ENCODE measurements at regions of chr4 and their contacts with region 1.

Region 1: DNA sequence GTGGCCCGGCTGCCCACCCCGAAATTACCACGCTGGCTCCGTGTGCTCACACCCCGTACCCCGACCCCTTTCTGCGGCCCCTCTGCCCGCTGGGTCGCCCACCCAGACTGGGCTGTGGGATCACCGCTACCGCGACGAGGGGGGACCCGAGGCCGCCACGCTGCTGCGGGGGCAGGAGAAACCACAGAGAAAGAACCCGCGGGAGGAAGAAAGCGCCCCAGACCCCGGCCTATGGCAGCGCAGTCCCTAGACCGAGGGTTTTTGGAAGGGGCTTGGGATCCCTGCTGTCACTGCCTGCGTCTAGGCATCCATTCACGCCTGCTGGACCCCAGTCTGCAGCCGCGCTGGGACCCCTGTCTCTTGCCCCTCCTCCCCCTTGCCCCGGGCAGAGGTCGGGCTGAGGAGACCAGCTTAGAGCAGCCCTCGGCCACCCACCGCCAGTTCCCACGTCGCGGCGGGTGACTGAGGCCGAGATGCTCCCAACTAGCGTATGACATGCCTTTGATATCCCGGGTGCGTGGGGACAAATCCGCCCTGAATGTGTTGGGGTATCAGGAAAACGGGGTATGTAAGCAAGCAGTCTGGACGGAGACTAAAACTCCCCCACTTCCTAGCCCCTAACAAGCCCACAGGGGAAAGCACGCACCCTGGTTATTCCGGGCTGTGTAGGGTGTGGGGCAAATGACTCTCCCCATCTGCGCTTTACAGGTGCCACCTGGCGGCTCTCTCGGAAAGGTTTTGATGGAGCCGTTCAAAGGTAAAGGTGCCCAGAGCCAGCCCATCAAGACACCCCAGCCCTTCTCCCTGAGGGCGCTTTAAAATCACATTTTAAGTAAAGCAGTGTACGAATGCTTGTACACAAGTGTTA is 862 bp upstream of the INPP4B start:
- DNase-seq: peak; percentile 89
- ATAC-seq: peak; percentile 82
- H3K4me3 Mint-ChIP-seq: peak overlapping the region; percentile 91
- H3K27ac Mint-ChIP-seq: peak overlapping the region; percentile 85
- H3K4me1 Mint-ChIP-seq: peaks cover 17% of the 10 kb centered on the region
- H3K27me3 Mint-ChIP-seq: peaks cover 6% of the 10 kb centered on the region

Region 2: GRCh38 chr4:141307241-141307689 is 1539.7 kb before region 1 on chr4:
- CTCF ChIA-PET with region 1: no interaction called
- POLR2A ChIA-PET with region 1: no interaction called
- intact Hi-C with region 1: loop called (anchors 1 kb)
- DNase-seq: peak; percentile 86
- ATAC-seq: peak; percentile 91
- H3K4me3 Mint-ChIP-seq: no peak overlapping the region
- H3K27ac Mint-ChIP-seq: no peak overlapping the region
- H3K4me1 Mint-ChIP-seq: peaks cover 3% of the 10 kb centered on the region
- H3K27me3 Mint-ChIP-seq: peaks cover 3% of the 10 kb centered on the region

Region 3: DNA sequence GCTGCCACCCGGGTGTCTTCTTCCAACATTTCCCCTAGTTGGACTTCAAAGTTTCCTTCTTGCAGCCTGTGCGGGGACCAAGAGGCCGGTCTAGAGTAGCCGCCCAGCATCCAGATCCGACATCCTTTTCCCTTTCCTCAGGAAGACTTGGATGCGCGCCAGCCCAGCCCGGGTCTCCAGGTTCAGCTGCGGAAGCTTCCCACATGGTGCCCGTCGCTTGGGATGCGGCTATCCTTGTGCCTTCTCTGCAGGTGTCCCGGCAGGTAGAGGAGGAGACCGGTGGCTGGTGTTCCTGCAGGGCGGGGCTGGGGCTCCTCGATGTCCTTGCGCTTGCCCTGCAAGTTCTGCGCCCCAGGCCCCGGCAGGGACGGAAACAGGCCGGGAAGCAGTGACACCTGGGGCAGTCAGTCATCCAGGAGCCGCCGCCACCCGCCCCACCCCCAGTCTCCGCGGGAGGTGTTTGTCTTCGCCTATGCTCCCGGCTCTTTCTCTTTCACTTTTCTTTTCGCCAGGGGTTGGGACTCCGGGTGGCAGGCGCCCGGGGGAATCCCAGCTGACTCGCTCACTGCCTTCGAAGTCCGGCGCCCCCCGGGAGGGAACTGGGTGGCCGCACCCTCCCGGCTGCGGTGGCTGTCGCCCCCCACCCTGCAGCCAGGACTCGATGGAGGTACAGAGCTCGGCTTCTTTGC is 1210.7 kb before region 1 on chr4 and contains the start of gene IL15:
- CTCF ChIA-PET with region 1: no interaction called
- POLR2A ChIA-PET with region 1: no interaction called
- intact Hi-C with region 1: loop called in 1 of 2 experiments (anchors 10 kb)
- DNase-seq: peak; percentile 85
- ATAC-seq: peak; percentile 90
- H3K4me3 Mint-ChIP-seq: peak within 1 kb of the TSS; percentile 86
- H3K27ac Mint-ChIP-seq: peak within 1 kb of the TSS; percentile 67
- H3K4me1 Mint-ChIP-seq: peaks cover 18% of the 10 kb centered on the region
- H3K27me3 Mint-ChIP-seq: peaks cover 20% of the 10 kb centered on the region
- total RNA-seq, gene IL15: 0.37 to 1.1 TPM

Region 4: GRCh38 chr4:142126890-142127497 is 720.0 kb before region 1 on chr4:
- CTCF ChIA-PET with region 1: interaction called, 6 read pairs
- POLR2A ChIA-PET with region 1: no interaction called
- intact Hi-C with region 1: loop called (anchors 1 to 2 kb)
- DNase-seq: peak; percentile 75
- ATAC-seq: peak; percentile 74
- H3K4me3 Mint-ChIP-seq: no peak overlapping the region
- H3K27ac Mint-ChIP-seq: no peak overlapping the region
- H3K4me1 Mint-ChIP-seq: peaks cover 32% of the 10 kb centered on the region
- H3K27me3 Mint-ChIP-seq: no peaks in the 10 kb centered on the region

Region 5: DNA sequence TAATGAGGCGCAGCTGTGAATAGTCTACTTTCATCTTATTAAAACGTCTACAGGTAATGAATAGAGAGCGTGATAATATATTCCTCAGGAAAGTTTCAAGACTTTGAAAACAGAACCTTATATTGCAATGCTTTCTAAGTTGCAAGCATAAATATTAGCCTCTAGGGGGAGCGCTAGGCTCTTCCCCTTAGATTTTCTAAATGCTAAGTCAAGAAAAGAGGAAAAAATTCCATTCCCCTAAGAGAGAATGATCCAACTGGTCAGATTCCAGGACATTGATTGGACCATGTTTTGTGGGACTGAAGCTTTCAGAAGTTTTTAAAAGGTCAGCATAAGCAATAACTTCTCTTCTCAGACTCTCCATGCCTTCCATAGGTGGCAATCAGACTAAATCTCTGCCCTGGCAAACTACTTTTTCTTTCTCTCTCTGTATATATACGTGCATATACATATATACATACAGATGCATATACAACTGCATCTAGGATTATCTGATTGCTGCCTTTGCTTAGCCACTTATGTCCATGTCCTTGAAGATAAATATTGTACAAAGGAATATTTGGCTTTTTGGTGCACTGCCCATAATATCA is 493.7 kb before region 1 on chr4:
- CTCF ChIA-PET with region 1: interaction called, 4 read pairs
- POLR2A ChIA-PET with region 1: no interaction called
- intact Hi-C with region 1: loop called (anchors 2 to 5 kb)
- DNase-seq: no peak
- ATAC-seq: peak; percentile 20
- H3K4me3 Mint-ChIP-seq: peak overlapping the region; percentile 37
- H3K27ac Mint-ChIP-seq: peak overlapping the region; percentile 97
- H3K4me1 Mint-ChIP-seq: peaks cover 97% of the 10 kb centered on the region
- H3K27me3 Mint-ChIP-seq: no peaks in the 10 kb centered on the region

Region 6: GRCh38 chr4:142817442-142817841 is 29.5 kb before region 1 on chr4:
- CTCF ChIA-PET with region 1: interaction called, 4 read pairs
- POLR2A ChIA-PET with region 1: no interaction called
- intact Hi-C with region 1: loop called in 1 of 2 experiments (anchors 2 kb)
- DNase-seq: peak; percentile 77
- ATAC-seq: peak; percentile 88
- H3K4me3 Mint-ChIP-seq: peak overlapping the region; percentile 18
- H3K27ac Mint-ChIP-seq: peak overlapping the region; percentile 82
- H3K4me1 Mint-ChIP-seq: peaks cover 32% of the 10 kb centered on the region
- H3K27me3 Mint-ChIP-seq: no peaks in the 10 kb centered on the region

Measured in activated CD4-positive, alpha-beta T cell treated with anti-CD3 and anti-CD28 coated beads for 36 hours (primary cell).